ENCODE measurements at regions of chr10 and their contacts with region 1.

Region 1: DNA sequence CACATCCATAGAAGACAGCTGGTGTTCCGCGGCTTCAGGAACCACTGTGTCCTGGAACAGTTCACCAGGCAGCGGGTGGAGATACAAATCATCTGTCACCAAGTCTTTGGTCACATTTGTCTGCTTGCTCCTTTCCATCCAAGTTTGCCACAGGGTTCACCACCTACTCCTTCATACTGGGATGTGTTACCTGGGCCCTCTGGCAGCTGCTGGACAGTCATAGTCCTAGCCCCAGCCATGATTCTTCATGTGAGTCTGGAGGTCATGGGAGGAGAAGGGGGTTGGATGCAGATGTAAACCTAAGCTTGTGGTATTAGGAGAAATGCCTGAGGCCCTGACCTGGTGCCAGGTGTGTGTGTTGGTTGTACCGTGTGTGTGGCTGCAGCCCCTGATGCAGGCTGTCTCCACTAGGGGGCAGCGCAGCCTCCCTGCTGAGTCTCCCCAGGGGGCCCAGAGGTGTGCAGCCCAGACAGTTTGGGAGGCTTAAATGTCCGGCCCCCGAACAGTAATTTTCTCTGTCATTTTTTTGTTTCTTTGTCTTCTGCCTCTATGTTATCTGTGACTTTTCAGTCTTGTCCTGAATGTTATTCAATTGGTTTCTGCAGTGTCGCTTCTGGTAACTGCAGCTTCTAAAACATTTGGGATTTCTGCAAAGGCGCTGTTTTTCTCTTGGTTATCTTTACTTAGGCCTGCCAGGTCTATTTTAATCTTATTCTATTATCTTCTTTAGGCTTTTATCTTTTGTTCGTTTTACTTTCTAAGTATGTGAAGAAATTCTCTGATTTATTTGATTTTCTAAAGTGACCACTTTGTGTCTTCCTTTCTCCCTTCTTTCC is 14.8 kb downstream of the NPS start:
- DNase-seq: no peak
- ATAC-seq: peak; percentile 73
- H3K4me3 ChIP-seq: no peak overlapping the region
- H3K27ac ChIP-seq: no peak overlapping the region
- H3K4me1 ChIP-seq: no peaks in the 10 kb centered on the region
- H3K27me3 ChIP-seq: no peaks in the 10 kb centered on the region
- CTCF ChIP-seq: peak; percentile 46 to 68 (median 58)
- EP300 ChIP-seq: no peak
- POLR2A ChIP-seq: no peak
- RAD21 ChIP-seq: 0 out of 2 replicates have a peak, but pooled peaks have one; percentile 26

Region 2: GRCh38 chr10:126387023-126387921 is 1176.7 kb before region 1 on chr10:
- CTCF ChIA-PET with region 1: no interaction called
- POLR2A ChIA-PET with region 1: no interaction called
- RAD21 ChIA-PET with region 1: no interaction called
- SMC1A ChIA-PET with region 1: no interaction called
- in situ Hi-C with region 1: no loop called
- intact Hi-C with region 1: no loop called
- DNase-seq: no peak
- ATAC-seq: no peak
- H3K4me3 ChIP-seq: no peak overlapping the region
- H3K27ac ChIP-seq: no peak overlapping the region
- H3K4me1 ChIP-seq: no peaks in the 10 kb centered on the region
- H3K27me3 ChIP-seq: no peaks in the 10 kb centered on the region
- CTCF ChIP-seq: peak in 2 of 3 experiments; percentile 17 to 19; a peak in 1 of 6 replicates
- EP300 ChIP-seq: no peak
- POLR2A ChIP-seq: no peak
- RAD21 ChIP-seq: 0 out of 2 replicates have a peak, but pooled peaks have one; percentile 6

Region 3: GRCh38 chr10:127576051-127576450 is 12.1 kb after region 1 on chr10:
- CTCF ChIA-PET with region 1: interaction called, 12 read pairs
- POLR2A ChIA-PET with region 1: no interaction called
- RAD21 ChIA-PET with region 1: no interaction called
- SMC1A ChIA-PET with region 1: no interaction called
- in situ Hi-C with region 1: no loop called
- intact Hi-C with region 1: no loop called
- DNase-seq: no peak
- ATAC-seq: no peak
- H3K4me3 ChIP-seq: no peak overlapping the region
- H3K27ac ChIP-seq: no peak overlapping the region
- H3K4me1 ChIP-seq: no peaks in the 10 kb centered on the region
- H3K27me3 ChIP-seq: no peaks in the 10 kb centered on the region
- CTCF ChIP-seq: no peak
- EP300 ChIP-seq: no peak
- POLR2A ChIP-seq: no peak
- RAD21 ChIP-seq: no peak